ENCODE measurements at regions of chr15 and their contacts with region 1.

Region 1: GRCh38 chr15:47577000-47577399 is 140.3 kb upstream of the SEMA6D start:
- DNase-seq: no peak
- ATAC-seq: no peak
- H3K4me3 ChIP-seq: no peak overlapping the region
- H3K27ac ChIP-seq: no peak overlapping the region
- H3K4me1 ChIP-seq: peaks cover 28% of the 10 kb centered on the region
- H3K27me3 ChIP-seq: no peaks in the 10 kb centered on the region
- CTCF ChIP-seq: no peak

Region 2: DNA sequence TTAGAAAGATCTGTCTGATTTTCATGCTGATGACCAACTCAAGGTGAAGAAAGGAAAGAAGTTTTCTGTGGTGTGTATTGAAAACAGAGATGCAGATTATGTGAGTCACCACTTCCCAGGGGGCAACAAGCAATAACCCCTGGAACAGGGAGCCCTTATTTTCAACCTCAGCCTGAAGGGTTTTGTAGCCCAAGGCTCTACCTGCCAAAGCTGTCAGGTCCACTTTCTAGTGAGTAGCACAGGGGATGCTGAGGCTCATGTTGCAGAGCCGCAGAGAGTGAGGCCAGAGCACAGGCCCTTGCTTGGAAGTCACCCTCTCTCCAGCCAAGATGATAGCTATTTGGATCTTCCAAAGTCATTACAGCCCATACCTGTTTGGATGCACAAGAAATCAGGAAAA is 391.6 kb after region 1 on chr15:
- CTCF ChIA-PET with region 1: no interaction called
- POLR2A ChIA-PET with region 1: interaction called, 13 read pairs
- intact Hi-C with region 1: no loop called
- DNase-seq: no peak
- ATAC-seq: no peak
- H3K4me3 ChIP-seq: no peak overlapping the region
- H3K27ac ChIP-seq: no peak overlapping the region
- H3K4me1 ChIP-seq: no peaks in the 10 kb centered on the region
- H3K27me3 ChIP-seq: no peaks in the 10 kb centered on the region
- CTCF ChIP-seq: no peak